HCT116 (cell line): ENCODE measurements at regions of chr5 and their contacts with region 1.

Region 1: DNA sequence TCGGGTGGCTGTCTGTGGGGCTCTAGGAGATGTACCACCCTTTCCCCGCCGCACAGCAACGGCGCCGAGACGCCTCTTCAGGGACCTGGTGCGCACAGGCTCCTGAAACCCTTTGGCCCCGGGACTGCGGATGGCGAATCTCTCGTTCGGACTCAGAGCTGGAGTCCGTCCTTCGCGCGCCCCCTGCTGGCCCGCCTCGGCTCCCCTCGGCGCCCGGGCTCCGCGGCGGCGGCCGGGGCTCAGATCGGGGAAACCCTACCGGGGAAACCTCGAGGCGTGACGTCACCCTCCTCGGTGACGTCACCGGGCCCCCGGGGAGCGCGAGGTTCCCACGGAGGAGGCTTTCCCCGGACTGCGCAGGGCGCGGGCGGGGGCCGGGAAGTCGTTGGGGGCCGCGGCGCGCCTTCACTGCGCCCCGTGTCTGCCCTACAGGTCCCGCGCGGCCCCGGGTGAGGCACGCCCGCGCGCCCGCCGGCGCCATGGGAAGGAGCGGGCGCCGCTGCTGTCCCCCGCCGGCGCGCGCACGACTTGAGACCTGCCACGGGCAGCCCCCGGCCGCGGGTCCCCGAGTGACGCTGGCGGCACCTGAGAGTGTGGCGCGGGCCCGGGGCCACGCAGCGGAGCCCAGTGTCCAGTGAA is 7.9 kb downstream of the PRR7 start:
- DNase-seq: peak; percentile 62
- ATAC-seq: peak; percentile 52
- H3K4me3 ChIP-seq: peak overlapping the region; percentile 68 to 76
- H3K27ac ChIP-seq: peak overlapping the region; percentile 96
- H3K4me1 ChIP-seq: peaks cover 18 to 60% of the 10 kb centered on the region in 2 experiments; a peak in 3 of 4 replicates
- H3K27me3 ChIP-seq: no peaks in the 10 kb centered on the region
- CTCF ChIP-seq: peak in 2 of 3 experiments; percentile 76 to 95; a peak in 4 of 6 replicates
- POLR2A ChIP-seq: no peak
- RAD21 ChIP-seq: no peak

Region 2: GRCh38 chr5:176887252-176887849 is 567.2 kb before region 1 on chr5:
- CTCF ChIA-PET with region 1: no interaction called
- POLR2A ChIA-PET with region 1: no interaction called
- RAD21 ChIA-PET with region 1: no interaction called
- intact Hi-C with region 1: no loop called
- DNase-seq: no peak
- ATAC-seq: no peak
- H3K4me3 ChIP-seq: no peak overlapping the region
- H3K27ac ChIP-seq: no peak overlapping the region
- H3K4me1 ChIP-seq: no peaks in the 10 kb centered on the region
- H3K27me3 ChIP-seq: no peaks in the 10 kb centered on the region
- CTCF ChIP-seq: peak; percentile 13 to 28 (median 24); a peak in 2 of 6 replicates
- POLR2A ChIP-seq: no peak
- RAD21 ChIP-seq: no peak

Region 3: GRCh38 chr5:177171961-177172360 is 282.6 kb before region 1 on chr5:
- CTCF ChIA-PET with region 1: no interaction called
- POLR2A ChIA-PET with region 1: no interaction called
- RAD21 ChIA-PET with region 1: no interaction called
- intact Hi-C with region 1: no loop called
- DNase-seq: no peak
- ATAC-seq: no peak
- H3K4me3 ChIP-seq: no peak overlapping the region
- H3K27ac ChIP-seq: no peak overlapping the region
- H3K4me1 ChIP-seq: no peaks in the 10 kb centered on the region
- H3K27me3 ChIP-seq: no peaks in the 10 kb centered on the region
- CTCF ChIP-seq: no peak
- POLR2A ChIP-seq: no peak
- RAD21 ChIP-seq: no peak

Region 4: GRCh38 chr5:177317959-177318377 is 136.5 kb before region 1 on chr5:
- CTCF ChIA-PET with region 1: interaction called, 3 read pairs
- POLR2A ChIA-PET with region 1: no interaction called
- RAD21 ChIA-PET with region 1: no interaction called
- intact Hi-C with region 1: loop called (anchors 1 kb)
- DNase-seq: peak; percentile 63
- ATAC-seq: peak; percentile 75
- H3K4me3 ChIP-seq: no peak overlapping the region
- H3K27ac ChIP-seq: no peak overlapping the region
- H3K4me1 ChIP-seq: peaks cover 3 to 16% of the 10 kb centered on the region in 2 experiments; a peak in 3 of 4 replicates
- H3K27me3 ChIP-seq: no peaks in the 10 kb centered on the region
- CTCF ChIP-seq: peak in 2 of 3 experiments; percentile 79 to 93; a peak in 4 of 6 replicates
- POLR2A ChIP-seq: no peak
- RAD21 ChIP-seq: no peak

Region 5: GRCh38 chr5:177390363-177391300 is 63.9 kb before region 1 on chr5:
- CTCF ChIA-PET with region 1: interaction called, 40 read pairs
- POLR2A ChIA-PET with region 1: interaction called, 6 read pairs
- RAD21 ChIA-PET with region 1: interaction called in 1 of 2 experiments, 6 read pairs
- intact Hi-C with region 1: loop called (anchors 1 kb)
- DNase-seq: peak; percentile 81
- ATAC-seq: peak; percentile 78
- H3K4me3 ChIP-seq: no peak overlapping the region
- H3K27ac ChIP-seq: peak overlapping the region; percentile 63
- H3K4me1 ChIP-seq: peaks cover 24 to 43% of the 10 kb centered on the region in 2 experiments
- H3K27me3 ChIP-seq: no peaks in the 10 kb centered on the region
- CTCF ChIP-seq: peak in 2 of 3 experiments; percentile 94 to 96; a peak in 4 of 6 replicates
- POLR2A ChIP-seq: no peak
- RAD21 ChIP-seq: no peak

Region 6: GRCh38 chr5:177425801-177426565 is 28.5 kb before region 1 on chr5:
- CTCF ChIA-PET with region 1: interaction called, 11 read pairs
- POLR2A ChIA-PET with region 1: interaction called, 5 read pairs
- RAD21 ChIA-PET with region 1: interaction called in 1 of 2 experiments, 4 read pairs
- intact Hi-C with region 1: no loop called
- DNase-seq: peak; percentile 100
- ATAC-seq: peak; percentile 90
- H3K4me3 ChIP-seq: peak overlapping the region; percentile 45 to 62
- H3K27ac ChIP-seq: peak overlapping the region; percentile 63
- H3K4me1 ChIP-seq: peaks cover 15 to 28% of the 10 kb centered on the region in 2 experiments
- H3K27me3 ChIP-seq: no peaks in the 10 kb centered on the region
- CTCF ChIP-seq: no peak
- POLR2A ChIP-seq: peak; percentile 42
- RAD21 ChIP-seq: no peak

Region 7: GRCh38 chr5:177497292-177498033 is 42.9 kb after region 1 on chr5 and contains the start of gene PDLIM7:
- CTCF ChIA-PET with region 1: interaction called, 28 read pairs
- POLR2A ChIA-PET with region 1: interaction called, 9 read pairs
- RAD21 ChIA-PET with region 1: no interaction called
- intact Hi-C with region 1: loop called (anchors 1 kb)
- DNase-seq: peak; percentile 92
- ATAC-seq: peak; percentile 72
- H3K4me3 ChIP-seq: peak within 1 kb of the TSS; percentile 88 to 89
- H3K27ac ChIP-seq: peak within 1 kb of the TSS; percentile 96
- H3K4me1 ChIP-seq: peaks cover 39 to 63% of the 10 kb centered on the region in 2 experiments
- H3K27me3 ChIP-seq: no peaks in the 10 kb centered on the region
- CTCF ChIP-seq: no peak
- POLR2A ChIP-seq: peak; percentile 92
- RAD21 ChIP-seq: no peak
- total RNA-seq, gene PDLIM7: 153 TPM